CD4-positive, alpha-beta memory T cell (primary cell): ENCODE measurements at regions of chr19 and their contacts with region 1.

Region 1: DNA sequence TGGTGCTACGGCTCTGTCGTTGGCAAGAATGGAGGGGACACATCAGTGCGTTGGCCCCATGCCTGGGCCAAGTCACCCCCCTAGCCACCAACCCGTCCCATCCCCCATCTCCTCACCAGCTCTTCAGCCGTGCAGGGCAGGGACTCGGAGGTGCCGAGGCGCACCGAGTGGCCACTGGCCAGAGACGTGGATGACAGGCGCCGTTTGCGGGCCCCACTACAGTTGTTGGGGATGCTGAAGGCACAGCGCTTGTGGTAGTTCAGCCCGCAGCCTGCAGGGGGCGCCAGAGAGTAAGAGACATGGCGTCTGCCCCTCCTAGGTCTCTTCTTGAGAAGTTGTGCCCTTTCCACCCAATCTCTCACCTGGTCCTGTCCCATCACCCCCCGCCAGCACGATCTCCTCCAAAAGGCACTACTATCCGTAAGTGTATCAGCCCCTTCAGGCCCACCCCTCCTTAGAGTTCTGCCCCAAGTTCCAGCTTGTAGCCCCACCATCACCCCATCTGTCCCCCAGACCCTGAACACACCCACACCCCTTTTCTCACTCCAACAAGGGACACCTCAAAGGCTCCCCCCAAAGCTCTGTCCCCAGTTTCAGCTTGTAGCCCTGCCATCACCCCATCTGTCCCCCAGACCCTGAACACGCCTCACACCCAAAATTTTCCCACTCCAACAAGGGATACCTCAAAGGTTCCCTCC is 12.4 kb downstream of the PRKD2 start:
- DNase-seq: peak; percentile 74 to 83 (median 79)
- H3K4me3 ChIP-seq: no peak overlapping the region
- H3K4me3 Mint-ChIP-seq: peak overlapping the region in 1 of 8 donors; percentile 45
- H3K27ac ChIP-seq: no peak overlapping the region
- H3K27ac Mint-ChIP-seq: peak overlapping the region; percentile 10 to 92 (median 87)
- H3K4me1 ChIP-seq: peaks cover 14% of the 10 kb centered on the region
- H3K4me1 Mint-ChIP-seq: peaks cover 6 to 18% (median 12%) of the 10 kb centered on the region in 4 donors
- H3K27me3 ChIP-seq: no peaks in the 10 kb centered on the region
- H3K27me3 Mint-ChIP-seq: no peaks in the 10 kb centered on the region

Region 2: GRCh38 chr19:46614114-46614722 is 90.3 kb before region 1 on chr19:
- CTCF ChIA-PET with region 1: interaction called, 12 read pairs
- POLR2A ChIA-PET with region 1: interaction called, 3 read pairs
- intact Hi-C with region 1: no loop called
- DNase-seq: peak; percentile 70 to 75 (median 71)
- H3K4me3 ChIP-seq: no peak overlapping the region
- H3K4me3 Mint-ChIP-seq: peak overlapping the region in 7 of 8 donors; percentile 36 to 75 (median 52)
- H3K27ac ChIP-seq: no peak overlapping the region
- H3K27ac Mint-ChIP-seq: peak overlapping the region; percentile 76 to 93 (median 83)
- H3K4me1 ChIP-seq: peaks cover 80% of the 10 kb centered on the region
- H3K4me1 Mint-ChIP-seq: peaks cover 45 to 75% (median 60%) of the 10 kb centered on the region in 4 donors
- H3K27me3 ChIP-seq: no peaks in the 10 kb centered on the region
- H3K27me3 Mint-ChIP-seq: no peaks in the 10 kb centered on the region

Region 3: GRCh38 chr19:46692918-46693722 is 11.4 kb before region 1 on chr19:
- CTCF ChIA-PET with region 1: interaction called, 28 read pairs
- POLR2A ChIA-PET with region 1: interaction called, 4 read pairs
- intact Hi-C with region 1: no loop called
- DNase-seq: no peak
- H3K4me3 ChIP-seq: no peak overlapping the region
- H3K4me3 Mint-ChIP-seq: no peak overlapping the region
- H3K27ac ChIP-seq: peak overlapping the region; percentile 14
- H3K27ac Mint-ChIP-seq: peak overlapping the region in 5 of 7 donors; percentile 7 to 75 (median 64)
- H3K4me1 ChIP-seq: no peaks in the 10 kb centered on the region
- H3K4me1 Mint-ChIP-seq: no peaks in the 10 kb centered on the region
- H3K27me3 ChIP-seq: no peaks in the 10 kb centered on the region
- H3K27me3 Mint-ChIP-seq: no peaks in the 10 kb centered on the region

Region 4: GRCh38 chr19:46722796-46723461 is 18.4 kb after region 1 on chr19:
- CTCF ChIA-PET with region 1: interaction called, 173 read pairs
- POLR2A ChIA-PET with region 1: interaction called, 72 read pairs
- intact Hi-C with region 1: loop called (anchors 1 kb)
- DNase-seq: no peak
- H3K4me3 ChIP-seq: no peak overlapping the region
- H3K4me3 Mint-ChIP-seq: no peak overlapping the region
- H3K27ac ChIP-seq: no peak overlapping the region
- H3K27ac Mint-ChIP-seq: no peak overlapping the region
- H3K4me1 ChIP-seq: peaks cover 19% of the 10 kb centered on the region
- H3K4me1 Mint-ChIP-seq: peaks cover 14 to 27% (median 18%) of the 10 kb centered on the region in 4 donors
- H3K27me3 ChIP-seq: no peaks in the 10 kb centered on the region
- H3K27me3 Mint-ChIP-seq: no peaks in the 10 kb centered on the region

Region 5: GRCh38 chr19:46741447-46741846 is 36.9 kb after region 1 on chr19:
- CTCF ChIA-PET with region 1: interaction called, 13 read pairs
- POLR2A ChIA-PET with region 1: no interaction called
- intact Hi-C with region 1: no loop called
- DNase-seq: no peak
- H3K4me3 ChIP-seq: no peak overlapping the region
- H3K4me3 Mint-ChIP-seq: peak overlapping the region in 1 of 8 donors; percentile 20
- H3K27ac ChIP-seq: no peak overlapping the region
- H3K27ac Mint-ChIP-seq: no peak overlapping the region
- H3K4me1 ChIP-seq: peaks cover 40% of the 10 kb centered on the region
- H3K4me1 Mint-ChIP-seq: peaks cover 35 to 63% (median 43%) of the 10 kb centered on the region in 4 donors
- H3K27me3 ChIP-seq: no peaks in the 10 kb centered on the region
- H3K27me3 Mint-ChIP-seq: no peaks in the 10 kb centered on the region

Region 6: DNA sequence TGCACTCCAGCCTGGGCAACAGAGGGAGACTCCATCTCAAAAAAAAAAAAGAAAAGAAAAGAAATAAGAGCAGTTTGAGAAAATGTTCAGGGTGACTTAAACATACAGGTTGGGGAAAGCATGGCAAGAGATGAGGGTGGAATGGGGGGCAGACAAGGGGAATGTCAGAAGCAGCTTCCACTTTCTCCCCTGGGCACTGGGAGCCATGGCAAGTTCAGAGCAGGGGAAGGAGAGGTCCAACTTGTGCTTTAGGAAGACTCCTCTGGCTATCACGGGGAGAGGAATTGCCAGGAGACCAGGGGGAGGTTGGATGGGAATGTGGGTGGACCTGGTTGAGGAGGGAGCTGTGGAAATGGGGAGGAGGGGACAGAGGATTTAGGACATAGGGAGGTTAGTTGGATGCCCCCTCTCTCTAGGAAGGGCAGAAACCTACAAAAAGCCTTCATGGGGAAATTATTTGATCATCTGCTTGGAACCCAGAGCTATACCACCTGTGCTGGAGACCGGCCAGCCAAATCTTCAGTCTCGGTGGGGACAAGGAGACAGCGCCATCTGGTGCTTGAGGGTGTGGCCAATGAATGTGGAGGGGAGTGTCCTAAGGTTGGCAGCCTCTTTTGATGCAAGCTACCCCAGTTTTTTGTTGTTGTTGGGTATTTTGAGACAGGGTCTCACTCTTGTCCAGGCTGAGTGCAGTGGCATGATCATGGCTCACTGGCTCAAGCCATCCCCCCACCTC is 49.1 kb after region 1 on chr19:
- CTCF ChIA-PET with region 1: interaction called, 82 read pairs
- POLR2A ChIA-PET with region 1: interaction called, 5 read pairs
- intact Hi-C with region 1: loop called (anchors 1 kb)
- DNase-seq: peak; percentile 62 to 80 (median 68)
- H3K4me3 ChIP-seq: no peak overlapping the region
- H3K4me3 Mint-ChIP-seq: no peak overlapping the region
- H3K27ac ChIP-seq: no peak overlapping the region
- H3K27ac Mint-ChIP-seq: peak overlapping the region in 5 of 7 donors; percentile 22 to 73 (median 57)
- H3K4me1 ChIP-seq: no peaks in the 10 kb centered on the region
- H3K4me1 Mint-ChIP-seq: peaks cover 6 to 13% (median 10%) of the 10 kb centered on the region in 4 donors
- H3K27me3 ChIP-seq: no peaks in the 10 kb centered on the region
- H3K27me3 Mint-ChIP-seq: no peaks in the 10 kb centered on the region